AG04449 (cell line): ENCODE measurements at regions of chr7 and their contacts with region 1.

Region 1: DNA sequence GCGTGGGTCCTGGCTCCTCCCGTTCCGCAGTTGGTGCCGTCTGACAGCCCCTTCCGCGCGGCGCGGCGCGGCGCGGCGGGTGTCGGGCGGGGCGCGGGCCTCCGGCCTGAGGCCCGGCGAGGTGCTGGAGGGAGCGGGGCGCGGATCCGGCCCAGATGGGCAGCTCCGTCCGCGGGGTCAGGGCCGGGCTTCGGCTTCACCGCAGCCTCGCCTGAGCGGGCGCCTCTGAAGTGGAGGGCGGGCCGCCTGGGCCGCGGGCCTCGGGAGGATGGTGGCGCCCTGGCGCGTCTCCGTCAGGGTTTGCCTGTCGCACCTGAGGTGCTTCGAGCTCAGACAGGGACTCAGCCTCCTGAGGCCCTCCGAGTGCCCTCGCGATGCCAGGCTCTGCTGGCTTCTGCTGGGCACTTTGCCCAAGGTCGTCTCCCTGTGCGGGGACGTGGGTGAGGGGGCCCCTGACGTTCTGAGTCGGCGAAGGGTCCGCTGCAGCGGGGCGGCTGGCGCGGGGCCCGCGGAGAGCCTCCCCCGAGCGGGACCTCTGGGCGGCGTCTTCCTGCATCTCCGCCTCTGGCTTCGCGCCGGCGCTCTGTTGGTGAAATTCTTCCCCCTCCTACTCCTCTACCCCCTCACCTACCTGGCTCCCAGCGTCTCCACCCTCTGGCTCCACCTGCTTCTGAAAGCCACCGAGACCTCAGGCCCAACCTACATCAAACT is 473 bp downstream of the ADCK2 start:
- DNase-seq: no peak
- H3K4me3 ChIP-seq: peak overlapping the region; percentile 71
- CTCF ChIP-seq: no peak

Region 2: GRCh38 chr7:140653319-140654108 is 19.7 kb before region 1 on chr7:
- CTCF ChIA-PET with region 1: interaction called, 16 read pairs
- POLR2A ChIA-PET with region 1: no interaction called
- DNase-seq: no peak
- H3K4me3 ChIP-seq: no peak overlapping the region
- CTCF ChIP-seq: peak; percentile 76

Region 3: GRCh38 chr7:140661121-140661520 is 12.1 kb before region 1 on chr7:
- CTCF ChIA-PET with region 1: interaction called, 16 read pairs
- POLR2A ChIA-PET with region 1: no interaction called
- DNase-seq: no peak
- H3K4me3 ChIP-seq: no peak overlapping the region
- CTCF ChIP-seq: peak; percentile 18

Region 4: DNA sequence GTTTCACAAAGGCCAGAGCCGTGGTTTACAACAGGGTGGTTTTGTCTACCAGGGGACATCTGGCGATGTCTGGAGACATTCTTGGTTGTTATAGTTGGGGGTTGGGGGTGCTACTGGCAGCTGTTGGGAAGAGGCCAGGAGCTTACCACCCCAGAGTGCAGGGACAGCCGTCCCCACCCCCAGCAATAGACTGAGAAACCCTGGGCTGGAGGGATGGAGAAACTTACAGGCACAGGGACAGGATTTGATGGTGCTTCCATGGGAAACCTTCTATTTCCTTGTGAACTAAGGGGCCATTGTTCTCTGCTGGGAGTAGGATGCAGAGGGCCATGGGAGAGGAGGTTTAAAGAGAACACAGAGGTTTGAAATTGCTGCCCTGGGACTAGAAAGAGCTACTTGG is 10.4 kb after region 1 on chr7:
- CTCF ChIA-PET with region 1: interaction called, 35 read pairs
- POLR2A ChIA-PET with region 1: no interaction called
- DNase-seq: no peak
- H3K4me3 ChIP-seq: no peak overlapping the region
- CTCF ChIP-seq: no peak

Region 5: GRCh38 chr7:141014524-141015395 is 341.5 kb after region 1 on chr7 and contains the start of gene MRPS33:
- CTCF ChIA-PET with region 1: interaction called, 39 read pairs
- POLR2A ChIA-PET with region 1: no interaction called
- DNase-seq: peak; percentile 79
- H3K4me3 ChIP-seq: peak within 1 kb of the TSS; percentile 85
- CTCF ChIP-seq: peak; percentile 87

Region 6: GRCh38 chr7:141533149-141533949 is 860.1 kb after region 1 on chr7:
- CTCF ChIA-PET with region 1: interaction called, 13 read pairs
- POLR2A ChIA-PET with region 1: no interaction called
- DNase-seq: peak; percentile 24
- H3K4me3 ChIP-seq: no peak overlapping the region
- CTCF ChIP-seq: peak; percentile 87